ENCODE measurements at regions of chr16 and their contacts with region 1.

Region 1: GRCh38 chr16:71564155-71564967 is 12.5 kb downstream of the TAT start:
- DNase-seq: no peak
- ATAC-seq: peak; percentile 84
- H3K4me3 Mint-ChIP-seq: peak overlapping the region; percentile 87
- H3K27ac Mint-ChIP-seq: peak overlapping the region; percentile 96
- H3K4me1 Mint-ChIP-seq: peaks cover 46% of the 10 kb centered on the region
- H3K27me3 Mint-ChIP-seq: no peaks in the 10 kb centered on the region
- CTCF ChIP-seq: no peak

Region 2: GRCh38 chr16:71288890-71289733 is 275.2 kb before region 1 on chr16 and contains the start of gene CMTR2:
- CTCF ChIA-PET with region 1: interaction called, 6 read pairs
- POLR2A ChIA-PET with region 1: interaction called, 8 read pairs
- intact Hi-C with region 1: loop called (anchors 1 kb)
- DNase-seq: peak; percentile 90
- ATAC-seq: peak; percentile 89
- H3K4me3 Mint-ChIP-seq: peak within 1 kb of the TSS; percentile 89
- H3K27ac Mint-ChIP-seq: peak within 1 kb of the TSS; percentile 94
- H3K4me1 Mint-ChIP-seq: peaks cover 29% of the 10 kb centered on the region
- H3K27me3 Mint-ChIP-seq: peaks cover 19% of the 10 kb centered on the region
- CTCF ChIP-seq: no peak
- total RNA-seq, gene CMTR2: 28.6 and 35.3 TPM in 2 replicates

Region 3: GRCh38 chr16:71484006-71484893 is 80.1 kb before region 1 on chr16:
- CTCF ChIA-PET with region 1: no interaction called
- POLR2A ChIA-PET with region 1: interaction called, 22 read pairs
- intact Hi-C with region 1: loop called (anchors 1 kb)
- DNase-seq: peak; percentile 75
- ATAC-seq: peak; percentile 85
- H3K4me3 Mint-ChIP-seq: peak overlapping the region; percentile 89
- H3K27ac Mint-ChIP-seq: peak overlapping the region; percentile 92
- H3K4me1 Mint-ChIP-seq: peaks cover 17% of the 10 kb centered on the region
- H3K27me3 Mint-ChIP-seq: peaks cover 8% of the 10 kb centered on the region
- CTCF ChIP-seq: no peak

Region 4: DNA sequence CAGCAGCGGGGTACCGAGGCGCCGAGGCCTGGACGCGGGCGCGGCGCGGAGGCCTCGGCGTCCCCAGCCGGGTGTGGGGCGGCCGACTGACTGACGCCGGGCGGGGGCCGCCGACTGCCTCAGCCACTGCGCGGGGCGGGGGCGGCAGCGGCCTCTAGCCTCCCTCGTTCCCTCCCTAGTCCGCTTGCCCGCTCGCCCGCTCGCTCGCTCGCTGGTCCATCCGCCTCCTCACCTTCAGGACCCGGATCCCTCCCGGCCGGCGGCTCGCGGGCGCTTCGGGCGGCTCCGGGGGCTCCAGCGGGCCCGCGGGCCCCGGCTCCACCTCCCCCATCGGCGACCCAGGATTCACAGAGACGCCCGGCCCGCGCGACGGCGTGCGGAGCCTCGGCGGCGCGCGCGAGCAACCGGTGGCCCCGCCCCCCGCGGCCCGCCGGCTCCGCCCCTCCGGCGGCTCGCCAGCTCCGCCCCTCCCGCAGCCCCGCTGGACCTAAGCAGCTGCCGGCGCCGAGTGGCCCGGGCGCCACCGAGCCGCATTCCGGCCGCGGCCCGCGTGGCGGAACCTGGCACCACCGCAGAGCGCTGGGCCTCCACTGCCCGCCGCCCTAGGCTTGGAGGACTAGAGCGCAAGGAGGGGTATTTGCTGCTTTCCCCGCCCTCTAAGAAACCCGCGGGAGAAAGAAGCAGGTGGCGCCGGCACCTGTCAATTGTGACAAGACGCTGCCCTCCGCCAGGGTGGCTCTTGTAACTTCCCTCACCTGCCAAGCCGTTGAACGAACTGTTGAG is 159.4 kb after region 1 on chr16:
- CTCF ChIA-PET with region 1: no interaction called
- POLR2A ChIA-PET with region 1: interaction called, 18 read pairs
- intact Hi-C with region 1: loop called (anchors 2 kb)
- DNase-seq: peak; percentile 87
- ATAC-seq: peak; percentile 80
- H3K4me3 Mint-ChIP-seq: peak overlapping the region; percentile 85
- H3K27ac Mint-ChIP-seq: peak overlapping the region; percentile 85
- H3K4me1 Mint-ChIP-seq: peaks cover 50% of the 10 kb centered on the region
- H3K27me3 Mint-ChIP-seq: no peaks in the 10 kb centered on the region
- CTCF ChIP-seq: no peak

Region 5: DNA sequence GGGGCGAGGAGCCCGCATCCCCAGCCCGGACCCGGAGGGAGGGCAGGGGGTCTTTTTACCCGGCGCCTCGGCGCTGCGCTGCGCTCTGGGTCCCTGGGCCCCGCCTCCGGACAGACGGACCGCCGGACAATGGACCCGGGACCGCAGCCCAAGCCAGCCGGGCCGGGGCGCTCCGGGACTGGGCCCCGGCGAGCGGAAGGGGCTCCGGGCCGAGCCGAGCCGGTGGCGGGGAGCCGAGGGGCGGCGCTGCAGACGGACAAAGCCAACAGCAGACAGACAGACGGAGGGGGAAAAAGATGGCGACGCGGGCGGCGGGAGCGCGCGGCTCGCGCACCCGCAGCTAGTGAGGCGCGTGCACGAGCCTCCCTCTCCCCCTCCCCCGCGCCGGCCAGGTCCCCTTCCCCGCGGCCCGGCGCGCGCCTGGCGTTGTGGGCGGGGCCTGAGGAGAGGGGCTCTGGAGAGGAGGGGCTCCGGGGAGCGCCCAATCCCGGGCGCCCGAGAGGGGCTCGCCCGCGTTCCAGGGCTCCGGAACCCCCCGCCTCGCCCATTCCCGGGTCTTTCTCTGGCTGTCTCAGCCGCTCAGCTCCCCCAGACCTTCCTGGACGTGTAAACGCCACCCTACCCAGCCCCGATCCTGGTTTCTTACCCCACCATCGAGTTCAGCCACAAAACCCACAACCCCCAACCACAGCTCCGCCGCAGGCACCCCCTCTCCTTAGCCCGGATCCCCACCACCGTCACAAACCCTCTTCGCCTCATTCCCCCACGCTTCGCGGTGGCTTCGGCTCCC is 319.7 kb after region 1 on chr16 and contains the start of gene ZNF821:
- CTCF ChIA-PET with region 1: interaction called, 8 read pairs
- POLR2A ChIA-PET with region 1: interaction called, 6 read pairs
- intact Hi-C with region 1: loop called (anchors 2 kb)
- DNase-seq: peak; percentile 81
- ATAC-seq: peak; percentile 75
- H3K4me3 Mint-ChIP-seq: peak within 1 kb of the TSS; percentile 98
- H3K27ac Mint-ChIP-seq: peak within 1 kb of the TSS; percentile 94
- H3K4me1 Mint-ChIP-seq: peaks cover 52% of the 10 kb centered on the region
- H3K27me3 Mint-ChIP-seq: no peaks in the 10 kb centered on the region
- CTCF ChIP-seq: no peak
- total RNA-seq, gene ZNF821: 10.6 and 13.6 TPM in 2 replicates

Region 6: DNA sequence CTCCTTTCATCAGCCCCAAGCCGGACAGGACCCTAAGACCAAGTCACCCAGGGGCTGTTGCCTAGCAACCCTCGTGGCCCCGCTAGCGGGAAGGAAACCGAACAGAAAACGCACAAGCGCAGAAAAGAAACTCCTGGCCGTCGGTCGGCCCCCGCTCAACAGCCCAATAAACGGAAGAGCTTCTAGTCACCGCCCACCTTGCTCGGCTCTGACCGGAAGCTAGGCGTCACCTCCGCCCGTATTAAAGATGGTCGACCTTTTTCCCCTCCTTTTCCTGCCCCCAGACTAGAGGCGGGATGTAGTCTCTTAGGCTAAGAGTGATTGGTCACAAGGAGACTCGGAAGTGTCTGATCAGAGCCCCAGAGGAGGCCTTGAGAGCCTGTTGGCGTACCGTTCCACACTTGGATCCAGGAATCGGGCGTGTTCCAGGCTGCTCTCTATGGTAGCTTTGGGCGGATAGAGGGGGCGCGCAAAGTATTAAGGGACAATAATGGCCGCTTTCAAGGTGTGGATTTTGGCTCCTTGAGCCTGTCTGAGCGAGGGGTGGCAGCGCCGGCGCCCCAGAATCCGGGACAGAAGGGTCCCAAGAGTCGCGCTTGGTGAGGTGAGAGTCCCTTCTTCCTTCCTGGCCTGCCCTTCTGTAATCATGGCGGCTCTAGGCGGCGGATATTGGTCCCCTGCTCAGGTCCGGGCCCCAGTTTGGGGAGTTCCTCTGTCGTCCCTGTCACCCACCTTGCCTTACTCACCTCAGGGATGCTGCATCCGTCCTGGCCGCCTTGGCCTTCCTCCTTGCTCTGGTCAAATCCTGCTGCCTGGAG is 529.3 kb after region 1 on chr16 and contains the starts of genes DHX38 and TXNL4B:
- CTCF ChIA-PET with region 1: no interaction called
- POLR2A ChIA-PET with region 1: interaction called, 4 read pairs
- intact Hi-C with region 1: loop called (anchors 1 kb)
- DNase-seq: peak; percentile 77
- ATAC-seq: peak; percentile 96
- H3K4me3 Mint-ChIP-seq: peak within 1 kb of the TSS; percentile 99
- H3K27ac Mint-ChIP-seq: peak within 1 kb of the TSS; percentile 96
- H3K4me1 Mint-ChIP-seq: peaks cover 47% of the 10 kb centered on the region
- H3K27me3 Mint-ChIP-seq: no peaks in the 10 kb centered on the region
- CTCF ChIP-seq: no peak
- total RNA-seq, gene DHX38: 107 and 118 TPM in 2 replicates
- total RNA-seq, gene TXNL4B: 13.1 and 13.8 TPM in 2 replicates

Measured in activated B cell treated with CpG ODN at 0.5 μM for 24 hours (primary cell).